ENCODE measurements at regions of chr10 and their contacts with region 1.

Region 1: DNA sequence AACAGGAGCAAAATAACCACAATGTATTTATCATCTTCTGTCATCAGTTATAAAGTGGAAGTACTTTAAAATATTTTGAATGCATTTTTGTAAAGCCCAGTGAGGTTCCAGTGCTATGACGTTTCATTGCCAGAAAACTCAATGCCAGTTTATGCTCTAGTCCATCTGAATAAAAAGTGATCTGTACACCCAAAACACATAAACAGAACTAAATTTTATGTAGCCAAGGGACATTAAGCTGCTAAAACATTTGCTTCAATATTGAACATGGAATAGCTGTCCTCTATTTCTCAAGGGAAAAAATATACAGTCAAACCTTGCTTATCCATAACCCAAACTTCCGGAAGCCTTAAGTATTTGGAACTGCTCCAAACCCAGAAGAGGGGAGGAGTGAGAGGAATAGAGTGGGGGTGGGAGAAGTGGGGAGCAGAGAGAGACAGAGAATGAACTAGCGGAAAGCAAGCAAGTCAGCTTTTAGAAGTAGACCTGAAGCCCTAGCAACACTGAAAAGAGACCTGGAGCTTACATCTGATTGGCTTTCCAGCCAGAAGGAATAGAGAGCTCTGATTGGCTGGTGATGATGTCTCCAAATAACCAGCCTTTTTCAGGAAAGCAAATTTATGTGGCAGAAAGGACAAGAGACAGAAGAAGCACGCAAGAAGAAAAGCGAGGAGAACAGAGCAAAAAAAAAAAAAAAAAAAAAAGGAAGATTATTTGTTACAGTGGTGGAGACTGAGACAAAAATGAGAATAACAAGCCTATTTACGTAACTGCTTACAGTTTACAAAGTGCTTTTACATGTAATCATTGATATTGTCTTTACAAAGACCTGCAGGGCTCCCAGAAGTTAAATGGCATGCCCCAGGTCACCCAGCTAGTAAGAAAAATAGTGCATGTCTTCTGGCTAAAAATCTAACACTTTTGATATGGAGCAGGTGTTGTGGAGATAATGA is 196.0 kb downstream of the RNLS start:
- DNase-seq: peak in 5 of 14 experiments; percentile 5 to 60 (median 52)
- ATAC-seq: peak; percentile 56
- H3K4me3 ChIP-seq: no peak overlapping the region
- H3K4me3 Mint-ChIP-seq: no peak overlapping the region
- H3K27ac ChIP-seq: peak overlapping the region; percentile 77 to 89
- H3K27ac Mint-ChIP-seq: no peak overlapping the region
- H3K4me1 ChIP-seq: peaks cover 45% of the 10 kb centered on the region
- H3K4me1 Mint-ChIP-seq: peaks cover 6% of the 10 kb centered on the region
- H3K27me3 ChIP-seq: no peaks in the 10 kb centered on the region
- H3K27me3 Mint-ChIP-seq: no peaks in the 10 kb centered on the region
- CTCF ChIP-seq: no peak

Region 2: DNA sequence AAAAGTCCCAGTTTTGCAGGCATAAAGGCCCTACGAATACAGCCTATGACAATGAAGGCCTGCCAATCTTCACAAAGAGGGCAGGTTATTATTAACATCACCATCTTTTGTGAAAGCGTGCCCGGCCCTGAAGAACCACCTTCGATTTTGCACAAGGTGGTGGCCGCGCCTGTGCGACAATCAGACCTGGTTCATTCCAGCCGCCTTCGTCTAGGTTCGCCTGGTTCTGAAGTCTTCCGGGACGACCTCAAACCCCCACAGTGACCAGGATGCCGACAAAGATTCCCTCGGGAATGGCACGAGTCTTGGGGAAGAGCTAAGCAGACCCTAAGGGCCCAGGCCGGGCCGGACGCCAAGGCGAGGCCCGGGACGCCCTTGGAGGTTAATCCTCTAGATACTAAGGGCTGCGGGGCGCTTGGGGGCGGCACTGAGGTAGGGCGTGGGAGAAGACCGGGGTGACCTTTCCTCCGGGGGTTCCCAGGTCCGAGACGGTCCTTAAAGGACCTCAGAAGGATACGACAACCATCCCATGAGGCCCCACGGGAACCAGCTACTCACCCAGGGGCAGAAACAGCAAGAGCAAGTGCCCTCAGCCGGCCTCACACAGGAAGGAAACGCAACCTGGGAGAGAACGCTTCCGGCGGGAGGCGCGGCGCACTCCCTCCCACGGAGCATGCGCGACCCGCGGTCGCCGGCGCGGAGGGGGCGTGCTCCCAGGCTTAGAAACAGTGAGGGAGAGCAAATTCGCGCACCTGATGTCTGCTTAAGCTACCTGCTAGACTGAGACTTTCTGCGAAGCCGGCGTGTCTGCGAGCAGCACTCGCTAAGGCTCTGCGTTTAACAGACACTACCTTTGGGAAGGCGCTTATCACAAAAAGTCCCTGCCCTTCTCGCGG is 569.2 kb before region 1 on chr10 and contains the start of gene ATAD1:
- CTCF ChIA-PET with region 1: no interaction called
- POLR2A ChIA-PET with region 1: interaction called, 32 read pairs
- intact Hi-C with region 1: no loop called
- DNase-seq: peak; percentile 78 to 95 (median 86)
- ATAC-seq: peak; percentile 79
- H3K4me3 ChIP-seq: peak within 1 kb of the TSS; percentile 93
- H3K4me3 Mint-ChIP-seq: peak within 1 kb of the TSS; percentile 92
- H3K27ac ChIP-seq: peak within 1 kb of the TSS; percentile 93 to 98
- H3K27ac Mint-ChIP-seq: peak within 1 kb of the TSS; percentile 99
- H3K4me1 ChIP-seq: peaks cover 19% of the 10 kb centered on the region
- H3K4me1 Mint-ChIP-seq: peaks cover 47% of the 10 kb centered on the region
- H3K27me3 ChIP-seq: no peaks in the 10 kb centered on the region
- H3K27me3 Mint-ChIP-seq: no peaks in the 10 kb centered on the region
- CTCF ChIP-seq: peak; percentile 5
- total RNA-seq, gene ATAD1: 33.7 to 38.7 TPM

Region 3: DNA sequence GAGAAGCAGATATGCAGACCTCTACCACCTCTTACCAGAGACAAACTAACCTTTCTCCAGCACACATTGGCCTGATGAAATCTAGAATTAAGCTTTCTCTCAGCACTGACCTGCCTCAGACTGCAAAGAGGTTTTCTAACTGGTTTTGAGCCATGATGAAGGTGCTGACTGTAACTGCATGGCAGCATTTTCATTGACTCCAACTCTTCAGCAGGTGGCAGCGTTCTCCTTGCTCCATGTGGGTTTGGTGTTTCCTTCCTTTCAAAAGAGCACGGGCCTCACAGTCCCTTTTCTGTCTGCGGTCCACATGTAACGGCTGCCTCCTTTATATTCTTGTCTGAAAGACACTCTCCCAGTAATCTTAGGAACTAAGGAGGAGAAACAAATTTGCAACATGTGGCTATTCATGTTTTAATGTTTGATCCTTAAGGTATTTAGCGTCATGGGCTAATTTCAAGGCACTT is 536.3 kb before region 1 on chr10:
- CTCF ChIA-PET with region 1: interaction called, 4 read pairs
- POLR2A ChIA-PET with region 1: interaction called, 4 read pairs
- intact Hi-C with region 1: loop called in 1 of 2 experiments (anchors 2 kb)
- DNase-seq: peak; percentile 18 to 81 (median 39)
- ATAC-seq: peak; percentile 95
- H3K4me3 ChIP-seq: no peak overlapping the region
- H3K4me3 Mint-ChIP-seq: no peak overlapping the region
- H3K27ac ChIP-seq: no peak overlapping the region
- H3K27ac Mint-ChIP-seq: no peak overlapping the region
- H3K4me1 ChIP-seq: peaks cover 3% of the 10 kb centered on the region
- H3K4me1 Mint-ChIP-seq: peaks cover 17% of the 10 kb centered on the region
- H3K27me3 ChIP-seq: no peaks in the 10 kb centered on the region
- H3K27me3 Mint-ChIP-seq: no peaks in the 10 kb centered on the region
- CTCF ChIP-seq: peak; percentile 71

Region 4: DNA sequence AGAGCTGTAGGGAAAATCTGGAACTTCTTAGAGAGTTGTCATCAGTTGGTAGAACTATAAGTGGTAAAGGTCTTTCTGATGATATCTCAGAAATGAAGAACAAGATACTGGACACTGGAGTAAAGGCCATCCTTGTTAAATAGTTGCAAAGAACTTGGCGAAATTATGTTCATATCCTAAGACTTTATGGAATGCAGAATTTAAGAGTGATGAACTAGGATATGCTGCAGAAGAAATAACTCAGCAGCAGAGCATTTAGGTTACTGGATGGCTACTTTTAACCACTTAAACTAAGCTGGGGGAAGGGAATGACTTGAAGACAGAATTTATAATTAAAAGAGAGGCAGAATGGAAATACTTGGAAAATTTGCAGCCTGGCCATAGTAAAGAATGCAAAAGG is 500.0 kb before region 1 on chr10:
- CTCF ChIA-PET with region 1: no interaction called
- POLR2A ChIA-PET with region 1: no interaction called
- intact Hi-C with region 1: no loop called
- DNase-seq: no peak
- ATAC-seq: no peak
- H3K4me3 ChIP-seq: no peak overlapping the region
- H3K4me3 Mint-ChIP-seq: no peak overlapping the region
- H3K27ac ChIP-seq: no peak overlapping the region
- H3K27ac Mint-ChIP-seq: no peak overlapping the region
- H3K4me1 ChIP-seq: peaks cover 11% of the 10 kb centered on the region
- H3K4me1 Mint-ChIP-seq: peaks cover 65% of the 10 kb centered on the region
- H3K27me3 ChIP-seq: no peaks in the 10 kb centered on the region
- H3K27me3 Mint-ChIP-seq: no peaks in the 10 kb centered on the region
- CTCF ChIP-seq: no peak

Region 5: DNA sequence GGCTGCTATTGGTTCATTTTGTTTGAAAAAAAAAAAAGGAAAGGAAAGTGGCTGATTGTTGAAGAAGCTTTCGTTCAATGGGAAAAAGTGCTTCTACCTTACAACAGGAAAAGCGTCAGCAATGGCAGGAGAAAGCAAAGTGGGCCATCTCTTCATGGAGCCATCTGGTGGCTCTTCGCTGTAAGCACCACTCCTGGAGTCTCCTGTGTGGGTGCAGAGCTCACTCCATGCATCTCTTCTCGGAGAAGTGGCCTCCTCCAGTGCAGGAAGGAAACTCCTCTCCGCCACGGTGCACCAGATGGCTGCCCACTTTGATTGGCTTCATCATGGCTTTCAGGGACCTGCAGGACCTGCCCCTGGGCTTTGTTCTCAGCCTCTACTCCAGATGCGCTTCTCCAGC is 272.7 kb before region 1 on chr10:
- CTCF ChIA-PET with region 1: no interaction called
- POLR2A ChIA-PET with region 1: interaction called, 5 read pairs
- intact Hi-C with region 1: loop called (anchors 5 to 10 kb)
- DNase-seq: peak in 7 of 14 experiments; percentile 4 to 64 (median 43)
- ATAC-seq: peak; percentile 62
- H3K4me3 ChIP-seq: no peak overlapping the region
- H3K4me3 Mint-ChIP-seq: no peak overlapping the region
- H3K27ac ChIP-seq: no peak overlapping the region
- H3K27ac Mint-ChIP-seq: no peak overlapping the region
- H3K4me1 ChIP-seq: peaks cover 35% of the 10 kb centered on the region
- H3K4me1 Mint-ChIP-seq: no peaks in the 10 kb centered on the region
- H3K27me3 ChIP-seq: no peaks in the 10 kb centered on the region
- H3K27me3 Mint-ChIP-seq: no peaks in the 10 kb centered on the region
- CTCF ChIP-seq: peak; percentile 50

Region 6: GRCh38 chr10:88194041-88194887 is 192.8 kb before region 1 on chr10:
- CTCF ChIA-PET with region 1: interaction called, 3 read pairs
- POLR2A ChIA-PET with region 1: interaction called, 4 read pairs
- intact Hi-C with region 1: loop called in 1 of 2 experiments (anchors 10 kb)
- DNase-seq: peak; percentile 16 to 89 (median 40)
- ATAC-seq: peak; percentile 97
- H3K4me3 ChIP-seq: peak overlapping the region; percentile 19
- H3K4me3 Mint-ChIP-seq: peak overlapping the region; percentile 47
- H3K27ac ChIP-seq: peak overlapping the region; percentile 9 to 57
- H3K27ac Mint-ChIP-seq: peak overlapping the region; percentile 77
- H3K4me1 ChIP-seq: peaks cover 27% of the 10 kb centered on the region
- H3K4me1 Mint-ChIP-seq: peaks cover 61% of the 10 kb centered on the region
- H3K27me3 ChIP-seq: no peaks in the 10 kb centered on the region
- H3K27me3 Mint-ChIP-seq: no peaks in the 10 kb centered on the region
- CTCF ChIP-seq: no peak

Measured in CD4-positive, alpha-beta T cell (primary cell).